ENCODE measurements at regions of chr10 and their contacts with region 1.

Region 1: GRCh38 chr10:60099998-60100747 is 193.8 kb upstream of the CCDC6 start:
- DNase-seq: peak in 1 of 3 donors; percentile 49
- ATAC-seq: peak; percentile 82
- H3K4me3 ChIP-seq: no peak overlapping the region
- H3K4me1 ChIP-seq: no peaks in the 10 kb centered on the region
- CTCF ChIP-seq: no peak

Region 2: GRCh38 chr10:60434418-60435046 is 334.4 kb after region 1 on chr10:
- intact Hi-C with region 1: loop called (anchors 5 to 10 kb)
- DNase-seq: peak in 1 of 3 donors; percentile 73
- ATAC-seq: peak; percentile 82
- H3K4me3 ChIP-seq: no peak overlapping the region
- H3K4me1 ChIP-seq: no peaks in the 10 kb centered on the region
- CTCF ChIP-seq: peak; percentile 37

Measured in mucosa of descending colon (tissue), 3 donors.